ENCODE measurements at regions of chr1 and their contacts with region 1.

Region 1: GRCh38 chr1:201559679-201560162 is 20.8 kb downstream of the NAV1 start:
- DNase-seq: peak; percentile 71 to 86 (median 80)
- H3K4me3 ChIP-seq: no peak overlapping the region
- H3K27ac ChIP-seq: no peak overlapping the region
- H3K4me1 ChIP-seq: no peaks in the 10 kb centered on the region
- H3K27me3 ChIP-seq: no peaks in the 10 kb centered on the region
- CTCF ChIP-seq: peak; percentile 81 to 97 (median 95)
- EP300 ChIP-seq: no peak
- POLR2A ChIP-seq: peak; percentile 26

Region 2: DNA sequence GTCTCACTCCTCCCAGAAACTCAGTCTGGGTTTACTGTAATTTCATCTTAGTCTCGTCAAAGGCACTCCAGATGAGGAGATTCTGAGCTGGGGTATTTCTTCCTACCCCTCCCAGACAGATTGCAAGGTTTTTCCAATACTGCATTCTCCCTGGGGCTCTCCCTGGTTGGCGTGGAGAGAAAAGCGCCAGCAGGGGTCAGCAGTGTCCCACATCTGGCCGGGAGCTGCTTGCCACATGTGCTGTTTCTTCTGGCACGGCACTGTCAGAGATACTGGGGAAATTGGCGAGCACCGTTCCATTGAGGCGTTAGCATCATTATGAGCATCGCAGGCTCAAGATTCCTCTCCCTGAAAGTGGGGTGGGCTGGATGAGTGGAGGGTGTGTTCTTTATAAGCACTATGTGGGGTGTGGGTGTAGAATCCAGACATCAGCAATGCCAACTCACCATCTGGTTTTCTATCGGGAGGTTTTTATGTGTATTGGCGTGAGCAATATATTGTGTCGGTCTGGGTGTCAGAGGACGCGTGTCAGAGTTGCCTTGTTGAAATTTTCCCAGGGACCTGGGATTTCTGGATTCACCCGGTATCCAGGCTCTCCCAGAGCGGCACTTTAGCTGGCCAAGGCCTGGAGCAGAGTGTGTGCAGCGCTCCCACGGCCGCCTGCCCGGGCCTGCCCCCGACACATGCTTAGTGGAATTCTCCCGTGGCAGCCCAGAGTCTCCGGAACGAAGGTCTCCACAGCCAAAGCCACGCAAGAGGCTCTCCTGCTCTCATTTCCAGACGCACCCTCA is 28.8 kb before region 1 on chr1:
- intact Hi-C with region 1: no loop called
- DNase-seq: peak; percentile 72 to 88 (median 83)
- H3K4me3 ChIP-seq: no peak overlapping the region
- H3K27ac ChIP-seq: no peak overlapping the region
- H3K4me1 ChIP-seq: no peaks in the 10 kb centered on the region
- H3K27me3 ChIP-seq: no peaks in the 10 kb centered on the region
- CTCF ChIP-seq: peak; percentile 46 to 70 (median 68)
- EP300 ChIP-seq: no peak
- POLR2A ChIP-seq: no peak

Region 3: DNA sequence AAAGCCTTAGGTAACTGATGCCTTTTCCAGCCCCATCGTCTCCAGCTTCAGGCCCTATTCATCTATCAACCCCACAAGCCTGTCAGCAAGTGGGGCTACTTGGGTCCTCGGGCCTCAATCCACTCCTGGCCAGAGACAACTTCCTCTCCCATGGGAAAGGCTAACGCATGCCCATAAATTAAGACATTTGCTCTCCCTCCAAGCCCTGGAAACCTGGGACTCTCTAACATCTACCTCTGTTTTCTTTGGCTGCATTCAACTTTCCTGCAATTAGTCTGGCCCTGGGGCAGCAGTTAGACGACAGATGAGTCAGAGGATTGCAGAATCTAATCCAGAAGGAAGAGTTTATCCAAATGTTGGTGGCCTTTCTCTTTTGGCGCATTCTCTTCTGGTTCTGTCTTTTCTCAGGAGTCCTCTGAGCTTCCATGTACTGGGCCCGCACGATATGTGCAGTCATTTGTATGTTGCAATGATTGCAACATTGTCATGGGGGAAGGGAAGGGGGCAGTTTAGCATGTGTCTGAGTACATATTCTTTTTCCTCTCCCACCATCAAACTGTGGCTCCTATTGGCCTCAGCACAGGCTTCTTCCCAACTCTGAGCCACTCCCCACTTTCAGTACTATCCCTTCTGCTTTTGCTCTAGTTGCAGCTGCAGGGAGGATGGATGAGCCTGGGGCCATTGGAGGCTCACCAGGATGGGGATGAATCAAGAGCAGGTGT is 33.6 kb after region 1 on chr1:
- intact Hi-C with region 1: no loop called
- DNase-seq: peak in 1 of 5 donors; percentile 71
- H3K4me3 ChIP-seq: no peak overlapping the region
- H3K27ac ChIP-seq: no peak overlapping the region
- H3K4me1 ChIP-seq: no peaks in the 10 kb centered on the region
- H3K27me3 ChIP-seq: no peaks in the 10 kb centered on the region
- CTCF ChIP-seq: no peak
- EP300 ChIP-seq: peak; percentile 57
- POLR2A ChIP-seq: no peak

Region 4: GRCh38 chr1:201649761-201650622 is 90.3 kb after region 1 on chr1:
- intact Hi-C with region 1: loop called in 1 of 4 experiments (anchors 5 kb)
- DNase-seq: peak; percentile 63 to 89 (median 84)
- H3K4me3 ChIP-seq: peak overlapping the region; percentile 56
- H3K27ac ChIP-seq: peak overlapping the region in 1 of 2 donors; percentile 45
- H3K4me1 ChIP-seq: peaks cover 10% of the 10 kb centered on the region
- H3K27me3 ChIP-seq: no peaks in the 10 kb centered on the region
- CTCF ChIP-seq: no peak
- EP300 ChIP-seq: no peak
- POLR2A ChIP-seq: peak; percentile 34

Region 5: DNA sequence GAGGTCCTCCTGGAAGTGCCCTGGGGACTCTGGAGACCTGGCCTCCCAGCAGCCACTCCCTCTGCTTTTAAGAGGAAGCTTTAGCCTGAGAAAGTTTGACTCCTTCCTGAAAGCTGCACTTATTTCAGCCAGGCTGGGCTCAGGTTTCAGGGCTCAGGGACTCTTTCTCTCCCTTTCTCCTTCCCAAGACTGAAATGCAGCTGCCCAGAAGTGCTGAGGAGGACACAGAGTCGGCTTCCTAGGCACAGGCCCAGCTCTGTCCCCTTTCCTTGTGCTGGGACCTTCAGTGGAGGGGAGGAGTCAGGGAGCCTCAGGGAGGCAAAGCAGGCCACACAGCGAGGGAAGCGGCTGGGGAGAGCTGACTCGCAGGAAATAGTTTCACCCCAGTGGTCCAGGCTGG is 116.5 kb after region 1 on chr1:
- intact Hi-C with region 1: no loop called
- DNase-seq: peak in 1 of 5 donors; percentile 30
- H3K4me3 ChIP-seq: no peak overlapping the region
- H3K27ac ChIP-seq: no peak overlapping the region
- H3K4me1 ChIP-seq: peaks cover 4% of the 10 kb centered on the region
- H3K27me3 ChIP-seq: no peaks in the 10 kb centered on the region
- CTCF ChIP-seq: no peak
- EP300 ChIP-seq: no peak
- POLR2A ChIP-seq: no peak

Region 6: DNA sequence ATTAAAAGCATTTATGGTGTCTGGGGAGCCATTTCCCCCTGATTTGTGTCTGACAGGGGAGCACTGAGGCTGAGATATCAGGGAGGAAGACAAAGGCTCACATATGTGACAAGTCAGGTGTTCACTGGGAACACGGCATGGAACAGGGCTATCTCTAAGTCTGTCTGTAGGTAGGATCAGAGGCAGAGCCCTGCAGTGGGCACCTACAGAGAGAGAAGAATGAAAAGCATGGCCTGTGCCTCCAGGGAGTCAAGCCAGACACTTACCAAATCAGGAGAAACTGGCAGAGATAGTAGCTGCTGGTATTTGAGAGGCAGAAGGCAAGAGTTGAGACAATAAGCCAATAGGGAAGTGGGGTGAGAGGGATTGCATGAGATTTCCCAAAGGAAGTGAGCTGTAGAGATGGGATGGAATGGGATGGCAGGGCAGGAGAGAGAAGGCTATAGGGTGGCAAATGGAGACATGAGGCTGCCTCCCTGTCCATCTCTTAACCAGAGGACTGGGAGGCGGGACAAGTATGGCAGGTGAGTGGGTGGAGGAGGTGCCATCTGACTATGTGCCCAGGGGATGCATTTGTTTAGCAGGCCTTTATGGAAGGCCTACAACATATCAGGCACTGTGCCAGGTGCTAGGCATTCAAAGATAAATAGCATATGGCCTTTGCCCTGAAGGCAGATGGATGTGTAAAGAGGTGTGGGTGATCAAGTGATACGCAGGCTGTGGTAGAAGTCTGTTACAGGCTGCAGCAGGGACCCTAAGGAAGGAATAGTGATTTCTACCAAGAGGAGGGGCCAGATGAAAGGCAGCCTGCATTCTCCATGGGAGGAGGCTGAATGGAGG is 133.1 kb after region 1 on chr1:
- intact Hi-C with region 1: loop called in 1 of 4 experiments (anchors 5 kb)
- DNase-seq: no peak
- H3K4me3 ChIP-seq: no peak overlapping the region
- H3K27ac ChIP-seq: no peak overlapping the region
- H3K4me1 ChIP-seq: peaks cover 2% of the 10 kb centered on the region
- H3K27me3 ChIP-seq: no peaks in the 10 kb centered on the region
- CTCF ChIP-seq: no peak
- EP300 ChIP-seq: no peak
- POLR2A ChIP-seq: no peak

Region 7: GRCh38 chr1:201703621-201704439 is 144.1 kb after region 1 on chr1:
- intact Hi-C with region 1: loop called (anchors 2 kb)
- DNase-seq: peak; percentile 72 to 88 (median 86)
- H3K4me3 ChIP-seq: no peak overlapping the region
- H3K27ac ChIP-seq: no peak overlapping the region
- H3K4me1 ChIP-seq: no peaks in the 10 kb centered on the region
- H3K27me3 ChIP-seq: no peaks in the 10 kb centered on the region
- CTCF ChIP-seq: peak; percentile 93 to 94 (median 94)
- EP300 ChIP-seq: no peak
- POLR2A ChIP-seq: no peak

Region 8: GRCh38 chr1:201792534-201793305 is 233.0 kb after region 1 on chr1:
- intact Hi-C with region 1: loop called (anchors 2 to 10 kb)
- DNase-seq: peak; percentile 62 to 84 (median 77)
- H3K4me3 ChIP-seq: no peak overlapping the region
- H3K27ac ChIP-seq: peak overlapping the region in 1 of 2 donors; percentile 45
- H3K4me1 ChIP-seq: peaks cover 11% of the 10 kb centered on the region
- H3K27me3 ChIP-seq: no peaks in the 10 kb centered on the region
- CTCF ChIP-seq: peak; percentile 69 to 97 (median 96)
- EP300 ChIP-seq: no peak
- POLR2A ChIP-seq: no peak

Region 9: DNA sequence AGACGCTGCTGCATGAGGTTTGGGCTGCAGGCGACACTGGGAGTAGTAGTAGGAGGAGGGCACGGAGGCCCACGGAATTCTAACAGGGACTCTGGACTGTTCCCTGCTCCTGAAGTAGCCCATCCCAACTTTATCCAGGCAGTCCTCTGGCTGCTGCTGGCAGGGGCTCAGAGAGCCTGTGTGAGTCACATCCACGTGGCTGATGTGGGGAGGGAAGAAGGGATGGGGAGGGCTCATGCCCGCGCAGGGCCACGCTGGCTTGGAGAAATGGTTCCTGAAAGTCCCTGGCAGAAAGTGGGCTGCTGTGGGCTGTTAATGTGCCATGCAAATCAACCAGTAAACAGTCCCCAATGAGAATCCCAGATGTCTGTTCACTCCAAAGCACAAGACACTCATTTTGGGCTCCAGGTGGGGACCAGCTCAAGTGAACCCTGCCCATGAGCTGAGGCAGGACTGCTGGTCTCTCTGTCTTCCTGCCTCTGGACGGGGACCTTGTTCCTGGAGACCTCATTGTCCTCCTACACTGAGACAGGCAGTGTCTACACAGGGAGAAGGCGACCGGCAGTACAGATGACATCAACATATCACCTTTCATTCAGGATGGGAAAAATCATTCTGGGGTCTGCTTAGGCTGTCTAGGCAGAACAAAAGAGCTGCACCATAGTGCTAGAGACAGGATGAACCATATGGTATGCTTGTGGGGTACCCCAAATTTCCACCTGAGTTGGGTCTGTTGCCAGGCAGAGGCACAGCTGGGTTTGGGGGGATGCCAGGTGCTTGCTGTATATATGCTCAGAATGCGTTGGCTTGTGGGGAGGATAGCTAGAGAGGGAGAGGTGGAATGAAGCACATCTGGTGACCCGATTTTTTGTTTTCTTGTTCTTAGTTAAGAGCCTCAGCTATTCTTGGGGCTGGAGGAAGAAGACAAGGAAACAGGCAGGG is 1849.0 kb after region 1 on chr1:
- intact Hi-C with region 1: no loop called
- DNase-seq: peak; percentile 81 to 90 (median 85)
- H3K4me3 ChIP-seq: no peak overlapping the region
- H3K27ac ChIP-seq: peak overlapping the region; percentile 37 to 48
- H3K4me1 ChIP-seq: peaks cover 27% of the 10 kb centered on the region
- H3K27me3 ChIP-seq: no peaks in the 10 kb centered on the region
- CTCF ChIP-seq: no peak
- EP300 ChIP-seq: no peak
- POLR2A ChIP-seq: peak; percentile 19

Measured in ovary (tissue), 10 donors.